Activated B cell treated with CpG ODN at 0.5 μM for 24 hours (primary cell): ENCODE measurements at regions of chr5 and their contacts with region 1.

Region 1: GRCh38 chr5:74640450-74640953 is at the start of gene ENC1:
- DNase-seq: peak; percentile 76
- ATAC-seq: peak; percentile 79
- H3K4me3 Mint-ChIP-seq: peak within 1 kb of the TSS; percentile 91
- H3K27ac Mint-ChIP-seq: peak within 1 kb of the TSS; percentile 69
- H3K4me1 Mint-ChIP-seq: peaks cover 32% of the 10 kb centered on the region
- H3K27me3 Mint-ChIP-seq: peaks cover 3% of the 10 kb centered on the region
- CTCF ChIP-seq: no peak
- total RNA-seq, gene ENC1: 6.6 and 7.2 TPM in 2 replicates

Region 2: GRCh38 chr5:73498057-73499008 is 1142.2 kb before region 1 on chr5 and contains the start of gene BTF3:
- CTCF ChIA-PET with region 1: no interaction called
- POLR2A ChIA-PET with region 1: no interaction called
- intact Hi-C with region 1: loop called (anchors 10 kb)
- DNase-seq: peak; percentile 88
- ATAC-seq: peak; percentile 96
- H3K4me3 Mint-ChIP-seq: peak within 1 kb of the TSS; percentile 97
- H3K27ac Mint-ChIP-seq: peak within 1 kb of the TSS; percentile 97
- H3K4me1 Mint-ChIP-seq: peaks cover 33% of the 10 kb centered on the region
- H3K27me3 Mint-ChIP-seq: peaks cover 4% of the 10 kb centered on the region
- CTCF ChIP-seq: no peak
- total RNA-seq, gene BTF3: 753 and 798 TPM in 2 replicates

Region 3: GRCh38 chr5:74056789-74057164 is 583.7 kb before region 1 on chr5:
- CTCF ChIA-PET with region 1: interaction called, 6 read pairs
- POLR2A ChIA-PET with region 1: no interaction called
- intact Hi-C with region 1: loop called (anchors 2 kb)
- DNase-seq: no peak
- ATAC-seq: no peak
- H3K4me3 Mint-ChIP-seq: no peak overlapping the region
- H3K27ac Mint-ChIP-seq: no peak overlapping the region
- H3K4me1 Mint-ChIP-seq: no peaks in the 10 kb centered on the region
- H3K27me3 Mint-ChIP-seq: no peaks in the 10 kb centered on the region
- CTCF ChIP-seq: no peak

Region 4: DNA sequence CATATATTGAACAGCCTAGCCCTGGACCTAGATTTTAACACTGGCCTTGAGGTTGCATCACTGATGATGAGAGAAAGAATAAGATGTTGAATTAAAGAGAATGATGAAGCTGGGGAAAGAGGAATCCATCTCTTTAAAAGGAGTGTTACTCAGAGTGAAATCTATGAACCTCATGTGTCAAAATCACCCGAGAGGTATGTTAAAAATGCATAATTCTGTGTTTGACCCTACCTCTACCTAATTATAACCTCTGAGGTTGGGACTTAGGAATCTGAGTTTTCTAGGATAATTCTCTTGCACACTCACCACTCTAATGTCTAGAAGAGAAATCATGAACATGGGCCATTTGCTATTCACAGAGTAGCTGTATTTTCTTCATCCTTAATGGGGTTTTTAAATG is 479.3 kb before region 1 on chr5:
- CTCF ChIA-PET with region 1: no interaction called
- POLR2A ChIA-PET with region 1: no interaction called
- intact Hi-C with region 1: no loop called
- DNase-seq: no peak
- ATAC-seq: no peak
- H3K4me3 Mint-ChIP-seq: no peak overlapping the region
- H3K27ac Mint-ChIP-seq: no peak overlapping the region
- H3K4me1 Mint-ChIP-seq: no peaks in the 10 kb centered on the region
- H3K27me3 Mint-ChIP-seq: peaks cover 3% of the 10 kb centered on the region
- CTCF ChIP-seq: no peak

Region 5: DNA sequence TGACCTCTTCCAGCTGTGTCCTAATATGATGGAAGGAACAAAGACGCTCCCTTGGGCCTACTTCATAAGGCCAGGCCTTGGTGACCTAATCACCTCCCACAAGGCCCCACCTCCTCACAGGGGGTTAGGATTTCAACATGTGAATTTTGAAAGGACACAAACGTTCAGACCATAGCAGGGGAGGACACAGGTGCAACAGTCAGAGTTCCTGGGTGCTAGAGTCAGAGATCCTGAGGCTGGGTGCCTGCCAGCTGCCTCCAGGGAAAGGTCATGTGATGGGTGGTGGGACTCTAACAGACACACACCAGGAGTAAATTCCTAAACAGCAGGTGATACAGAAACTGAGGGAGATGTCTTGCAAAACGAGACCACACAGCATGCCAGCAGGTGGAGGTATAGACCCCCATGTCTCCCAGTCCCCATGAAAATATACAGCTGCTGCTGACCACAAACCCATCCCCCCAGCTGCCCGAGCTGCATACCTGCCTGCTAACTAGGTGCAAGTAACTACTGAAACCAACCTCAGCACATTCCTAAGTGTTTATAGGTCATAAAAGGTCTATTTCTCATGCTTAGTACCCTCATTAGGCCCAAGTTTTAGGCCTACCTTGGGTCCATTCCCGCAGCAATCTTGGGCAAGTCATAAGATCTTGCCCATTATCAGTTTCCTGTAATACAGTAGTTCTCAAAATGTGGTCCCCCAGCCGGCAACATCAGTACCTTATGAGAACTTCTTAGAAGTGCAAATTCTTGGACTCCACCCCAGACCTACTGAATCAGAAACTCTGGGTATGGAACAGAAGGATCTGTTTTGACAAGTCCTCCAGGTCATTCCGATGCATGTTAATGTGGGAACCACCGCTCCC is 245.4 kb before region 1 on chr5:
- CTCF ChIA-PET with region 1: interaction called, 7 read pairs
- POLR2A ChIA-PET with region 1: no interaction called
- intact Hi-C with region 1: loop called (anchors 1 kb)
- DNase-seq: no peak
- ATAC-seq: no peak
- H3K4me3 Mint-ChIP-seq: no peak overlapping the region
- H3K27ac Mint-ChIP-seq: no peak overlapping the region
- H3K4me1 Mint-ChIP-seq: no peaks in the 10 kb centered on the region
- H3K27me3 Mint-ChIP-seq: no peaks in the 10 kb centered on the region
- CTCF ChIP-seq: no peak

Region 6: GRCh38 chr5:74576941-74577456 is 63.5 kb before region 1 on chr5:
- CTCF ChIA-PET with region 1: no interaction called
- POLR2A ChIA-PET with region 1: interaction called, 5 read pairs
- intact Hi-C with region 1: loop called (anchors 2 kb)
- DNase-seq: no peak
- ATAC-seq: peak; percentile 64
- H3K4me3 Mint-ChIP-seq: peak overlapping the region; percentile 8
- H3K27ac Mint-ChIP-seq: peak overlapping the region; percentile 51
- H3K4me1 Mint-ChIP-seq: peaks cover 18% of the 10 kb centered on the region
- H3K27me3 Mint-ChIP-seq: peaks cover 7% of the 10 kb centered on the region
- CTCF ChIP-seq: no peak

Region 7: GRCh38 chr5:75336625-75337339 is 696.3 kb after region 1 on chr5 and contains the start of gene HMGCR:
- CTCF ChIA-PET with region 1: no interaction called
- POLR2A ChIA-PET with region 1: no interaction called
- intact Hi-C with region 1: loop called (anchors 5 kb)
- DNase-seq: peak; percentile 89
- ATAC-seq: peak; percentile 95
- H3K4me3 Mint-ChIP-seq: no peak within 1 kb of the TSS
- H3K27ac Mint-ChIP-seq: no peak within 1 kb of the TSS
- H3K4me1 Mint-ChIP-seq: peaks cover 30% of the 10 kb centered on the region
- H3K27me3 Mint-ChIP-seq: no peaks in the 10 kb centered on the region
- CTCF ChIP-seq: no peak
- total RNA-seq, gene HMGCR: 105 and 131 TPM in 2 replicates